CD4-positive, alpha-beta memory T cell (primary cell): ENCODE measurements at regions of chrX and their contacts with region 1.

Region 1: DNA sequence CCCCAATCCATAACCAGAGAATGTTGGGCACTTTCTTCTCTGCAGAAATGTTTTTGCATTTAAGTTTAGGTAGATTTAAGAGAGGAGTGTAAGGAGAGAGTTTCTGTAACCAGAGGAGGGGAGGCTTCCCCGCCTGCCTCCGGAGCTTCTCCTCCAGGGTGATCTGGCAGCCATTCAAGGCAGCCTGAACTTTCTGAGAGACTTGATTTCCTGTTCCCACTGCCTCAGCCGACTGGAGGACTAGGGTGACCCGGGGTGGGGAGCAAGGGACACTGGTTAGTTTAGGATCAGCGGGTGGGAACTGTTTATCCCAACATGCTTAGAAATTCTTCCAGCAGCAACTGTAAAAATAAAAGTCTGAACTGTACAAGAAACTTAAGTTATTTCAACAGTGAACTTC is 15.1 kb downstream of the FAM9C start:
- DNase-seq: no peak
- H3K4me3 ChIP-seq: no peak overlapping the region
- H3K4me3 Mint-ChIP-seq: peak overlapping the region; percentile 33 to 79 (median 65)
- H3K27ac ChIP-seq: peak overlapping the region; percentile 42
- H3K27ac Mint-ChIP-seq: peak overlapping the region; percentile 74 to 94 (median 90)
- H3K4me1 ChIP-seq: peaks cover 72% of the 10 kb centered on the region
- H3K4me1 Mint-ChIP-seq: peaks cover 45 to 76% (median 61%) of the 10 kb centered on the region in 4 donors
- H3K27me3 ChIP-seq: no peaks in the 10 kb centered on the region
- H3K27me3 Mint-ChIP-seq: no peaks in the 10 kb centered on the region

Region 2: GRCh38 chrX:12984629-12985319 is 44.6 kb before region 1 on chrX:
- CTCF ChIA-PET with region 1: interaction called, 3 read pairs
- POLR2A ChIA-PET with region 1: interaction called, 218 read pairs
- intact Hi-C with region 1: no loop called
- DNase-seq: peak; percentile 62 to 74 (median 72)
- H3K4me3 ChIP-seq: peak overlapping the region in 1 of 2 donors; percentile 34
- H3K4me3 Mint-ChIP-seq: peak overlapping the region; percentile 59 to 87 (median 70)
- H3K27ac ChIP-seq: peak overlapping the region; percentile 50
- H3K27ac Mint-ChIP-seq: peak overlapping the region; percentile 94 to 100 (median 97)
- H3K4me1 ChIP-seq: peaks cover 81% of the 10 kb centered on the region
- H3K4me1 Mint-ChIP-seq: peaks cover 45 to 75% (median 61%) of the 10 kb centered on the region in 4 donors
- H3K27me3 ChIP-seq: no peaks in the 10 kb centered on the region
- H3K27me3 Mint-ChIP-seq: no peaks in the 10 kb centered on the region

Region 3: GRCh38 chrX:13005661-13006473 is 23.5 kb before region 1 on chrX:
- CTCF ChIA-PET with region 1: interaction called, 4 read pairs
- POLR2A ChIA-PET with region 1: interaction called, 31 read pairs
- intact Hi-C with region 1: no loop called
- DNase-seq: no peak
- H3K4me3 ChIP-seq: no peak overlapping the region
- H3K4me3 Mint-ChIP-seq: peak overlapping the region; percentile 67 to 89 (median 77)
- H3K27ac ChIP-seq: peak overlapping the region; percentile 50
- H3K27ac Mint-ChIP-seq: peak overlapping the region; percentile 92 to 99 (median 96)
- H3K4me1 ChIP-seq: peaks cover 81% of the 10 kb centered on the region
- H3K4me1 Mint-ChIP-seq: peaks cover 43 to 75% (median 62%) of the 10 kb centered on the region in 4 donors
- H3K27me3 ChIP-seq: no peaks in the 10 kb centered on the region
- H3K27me3 Mint-ChIP-seq: no peaks in the 10 kb centered on the region

Region 4: GRCh38 chrX:13043144-13043543 is 13.8 kb after region 1 on chrX:
- CTCF ChIA-PET with region 1: no interaction called
- POLR2A ChIA-PET with region 1: interaction called, 13 read pairs
- intact Hi-C with region 1: no loop called
- DNase-seq: no peak
- H3K4me3 ChIP-seq: no peak overlapping the region
- H3K4me3 Mint-ChIP-seq: no peak overlapping the region
- H3K27ac ChIP-seq: no peak overlapping the region
- H3K27ac Mint-ChIP-seq: no peak overlapping the region
- H3K4me1 ChIP-seq: peaks cover 31% of the 10 kb centered on the region
- H3K4me1 Mint-ChIP-seq: peaks cover 14 to 45% (median 27%) of the 10 kb centered on the region in 4 donors
- H3K27me3 ChIP-seq: no peaks in the 10 kb centered on the region
- H3K27me3 Mint-ChIP-seq: no peaks in the 10 kb centered on the region

Region 5: DNA sequence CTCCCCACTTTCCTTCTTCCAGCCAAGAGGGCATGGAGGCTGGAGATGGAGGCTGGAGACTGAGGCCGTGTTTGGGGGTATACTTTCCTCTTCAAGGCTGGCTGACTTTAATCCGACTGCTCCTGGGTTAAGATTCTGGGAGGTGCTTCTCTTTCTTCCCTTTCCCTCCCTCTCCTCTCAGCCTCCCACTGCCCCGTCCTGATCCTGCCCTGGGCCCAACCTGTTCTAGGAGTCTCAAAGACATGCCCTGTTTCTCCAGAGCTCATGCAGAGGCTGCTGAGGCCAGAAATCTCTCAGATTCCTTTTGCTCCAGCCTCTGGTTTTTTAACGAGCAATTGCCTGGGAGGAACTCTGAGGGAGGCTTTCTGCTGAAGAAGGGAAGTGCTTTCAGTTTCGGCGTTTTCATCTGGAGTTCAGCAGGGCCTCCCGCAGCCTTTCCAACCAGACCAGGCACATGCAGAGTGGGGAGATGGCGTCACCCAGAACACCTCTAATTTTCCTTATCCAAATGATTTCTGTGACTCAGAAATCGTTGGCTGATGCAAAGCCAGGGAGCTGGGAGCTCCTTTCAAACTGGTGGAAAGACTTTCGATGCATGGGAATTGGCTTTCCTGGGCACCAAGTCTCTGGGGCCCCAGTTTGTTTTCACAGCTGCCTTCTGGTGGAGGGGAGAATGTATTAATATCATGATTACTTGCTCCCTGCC is 49.6 kb after region 1 on chrX:
- CTCF ChIA-PET with region 1: interaction called, 7 read pairs
- POLR2A ChIA-PET with region 1: interaction called, 78 read pairs
- intact Hi-C with region 1: no loop called
- DNase-seq: no peak
- H3K4me3 ChIP-seq: peak overlapping the region in 1 of 2 donors; percentile 27
- H3K4me3 Mint-ChIP-seq: peak overlapping the region; percentile 33 to 81 (median 66)
- H3K27ac ChIP-seq: peak overlapping the region; percentile 62
- H3K27ac Mint-ChIP-seq: peak overlapping the region; percentile 84 to 95 (median 93)
- H3K4me1 ChIP-seq: peaks cover 100% of the 10 kb centered on the region
- H3K4me1 Mint-ChIP-seq: peaks cover 57 to 96% (median 77%) of the 10 kb centered on the region in 4 donors
- H3K27me3 ChIP-seq: no peaks in the 10 kb centered on the region
- H3K27me3 Mint-ChIP-seq: no peaks in the 10 kb centered on the region